ENCODE measurements at regions of chr1 and their contacts with region 1.

Region 1: GRCh38 chr1:201447911-201448871 is 20.8 kb downstream of the PHLDA3 start:
- DNase-seq: peak; percentile 68
- H3K4me3 ChIP-seq: no peak overlapping the region
- CTCF ChIP-seq: peak; percentile 90

Region 2: GRCh38 chr1:201399352-201400126 is 48.7 kb before region 1 on chr1:
- in situ Hi-C with region 1: loop called (anchors 5 kb)
- DNase-seq: no peak
- H3K4me3 ChIP-seq: no peak overlapping the region
- CTCF ChIP-seq: no peak

Region 3: DNA sequence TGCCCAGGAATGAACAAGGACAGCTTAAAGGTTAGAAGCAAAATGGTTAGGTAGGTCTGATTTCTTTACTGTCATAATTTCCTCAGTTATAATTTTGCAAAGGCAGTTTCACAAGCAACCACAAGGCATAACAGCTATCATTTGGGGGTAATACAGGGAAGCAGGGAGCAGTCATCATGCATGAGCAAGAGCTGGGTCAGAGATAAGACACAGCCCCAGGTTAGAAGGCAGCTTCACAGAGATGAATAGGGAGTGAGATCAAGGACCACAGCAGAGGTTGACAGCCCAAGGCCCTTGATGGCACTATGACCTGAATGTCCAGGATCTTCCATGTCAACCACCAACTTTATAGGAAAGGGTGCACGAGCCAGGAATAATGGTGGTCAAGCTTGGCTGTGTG is 67.7 kb after region 1 on chr1:
- in situ Hi-C with region 1: loop called (anchors 5 kb)
- DNase-seq: no peak
- H3K4me3 ChIP-seq: no peak overlapping the region
- CTCF ChIP-seq: no peak